ENCODE measurements at regions of chr12 and their contacts with region 1.

Region 1: GRCh38 chr12:48851883-48852733 is at the start of gene DDX23:
- DNase-seq: peak; percentile 98
- H3K27ac ChIP-seq: peak within 1 kb of the TSS; percentile 71
- CTCF ChIP-seq: no peak

Region 2: GRCh38 chr12:48157018-48157888 is 694.9 kb before region 1 on chr12 and contains the start of gene ASB8:
- CTCF ChIA-PET with region 1: interaction called, 11 read pairs
- POLR2A ChIA-PET with region 1: no interaction called
- DNase-seq: peak; percentile 95
- H3K27ac ChIP-seq: peak within 1 kb of the TSS; percentile 77
- CTCF ChIP-seq: peak; percentile 55

Region 3: DNA sequence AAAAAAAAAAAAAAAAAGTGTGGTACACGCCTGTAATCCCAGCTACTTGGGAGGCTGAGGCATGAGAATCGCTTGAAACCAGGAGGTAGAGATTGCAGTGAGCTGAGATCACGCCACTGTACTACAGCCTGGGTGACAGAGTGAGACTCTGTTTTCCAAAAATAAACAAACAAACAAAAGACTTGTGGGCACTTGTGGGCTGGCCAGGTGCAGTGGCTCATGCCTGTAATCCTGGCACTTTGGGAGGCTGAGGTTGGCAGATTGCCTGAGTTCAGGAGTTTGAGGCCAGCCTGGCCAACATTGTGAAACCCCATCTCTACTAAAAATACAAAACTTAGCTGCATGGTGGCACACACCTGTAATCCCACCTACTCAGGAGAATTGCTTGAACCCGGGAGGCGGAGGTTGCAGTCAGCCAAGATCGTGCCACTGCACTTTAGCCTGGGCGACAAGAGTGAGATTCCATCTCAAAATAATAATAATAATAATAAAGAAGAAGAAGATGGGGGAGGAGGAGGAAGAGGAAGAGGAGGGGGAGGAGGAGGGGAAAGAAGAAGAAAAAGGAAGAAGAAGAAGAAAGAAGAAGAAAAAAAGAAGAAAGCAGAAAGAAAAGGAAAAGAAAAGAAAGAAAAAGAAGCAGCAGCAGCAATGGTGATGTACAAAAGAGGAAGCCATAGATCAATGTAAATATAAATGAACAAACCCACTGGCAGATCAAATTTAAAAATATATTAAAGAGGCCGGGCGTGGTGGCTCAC is 107.7 kb before region 1 on chr12:
- CTCF ChIA-PET with region 1: no interaction called
- POLR2A ChIA-PET with region 1: no interaction called
- DNase-seq: no peak
- H3K27ac ChIP-seq: no peak overlapping the region
- CTCF ChIP-seq: no peak

Region 4: GRCh38 chr12:48890657-48891418 is 38.7 kb after region 1 on chr12:
- CTCF ChIA-PET with region 1: interaction called, 20 read pairs
- POLR2A ChIA-PET with region 1: interaction called, 5 read pairs
- DNase-seq: peak; percentile 40
- H3K27ac ChIP-seq: no peak overlapping the region
- CTCF ChIP-seq: peak; percentile 75

Region 5: GRCh38 chr12:48988030-48988649 is 136.0 kb after region 1 on chr12:
- CTCF ChIA-PET with region 1: interaction called, 17 read pairs
- POLR2A ChIA-PET with region 1: no interaction called
- DNase-seq: peak; percentile 65
- H3K27ac ChIP-seq: no peak overlapping the region
- CTCF ChIP-seq: peak; percentile 85

Measured in RWPE1 (cell line).